ENCODE measurements at regions of chr6 and their contacts with region 1.

Region 1: DNA sequence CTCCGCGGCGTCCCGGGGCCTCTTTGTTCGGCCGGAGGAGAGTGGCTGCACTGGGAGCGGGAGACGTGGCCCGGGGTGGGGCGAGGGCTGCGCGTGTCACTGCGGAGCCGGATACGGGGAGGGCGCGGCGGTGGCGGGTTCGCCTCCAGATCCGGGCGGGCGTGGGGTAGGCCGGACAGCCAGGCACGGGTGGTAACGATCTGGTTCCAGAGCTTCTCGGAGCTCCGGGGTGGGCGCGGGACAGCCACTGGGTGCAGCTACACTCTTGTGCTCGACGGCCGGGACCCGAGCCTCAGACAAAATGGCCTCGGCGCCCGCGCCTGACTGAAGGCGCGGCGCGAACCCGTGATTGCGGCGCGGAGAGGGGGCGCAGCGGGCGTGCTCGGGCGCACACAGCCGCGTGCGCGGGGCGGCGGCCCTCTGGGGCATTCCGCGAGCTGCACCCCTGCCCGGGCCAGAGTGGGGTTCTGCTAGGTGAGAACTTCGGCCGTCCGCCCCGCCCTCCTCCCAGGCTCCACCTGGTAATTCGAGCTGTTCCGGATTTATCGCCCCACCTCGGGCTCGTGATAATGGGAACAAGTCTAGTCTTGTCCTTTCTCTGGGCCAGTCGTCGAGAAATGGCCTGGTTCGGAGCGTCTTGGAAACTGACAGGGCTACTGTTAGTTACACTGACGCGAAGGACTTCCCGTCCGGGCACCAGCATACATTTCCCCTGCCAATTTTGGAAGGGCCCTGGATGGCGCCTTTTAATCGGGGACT is 1.0 kb downstream of the LOC128125822 start:
- H3K4me3 ChIP-seq: peak overlapping the region; percentile 96
- H3K27ac ChIP-seq: peak overlapping the region; percentile 96
- H3K4me1 ChIP-seq: peaks cover 17% of the 10 kb centered on the region; the same call in 1 of the 2 replicates
- CTCF ChIP-seq: no peak; the same call in 1 of the 2 replicates

Region 2: GRCh38 chr6:63352587-63353285 is 220.6 kb before region 1 on chr6:
- CTCF ChIA-PET with region 1: interaction called, 24 read pairs
- POLR2A ChIA-PET with region 1: interaction called, 3 read pairs
- H3K4me3 ChIP-seq: no peak overlapping the region
- H3K27ac ChIP-seq: no peak overlapping the region
- H3K4me1 ChIP-seq: no peaks in the 10 kb centered on the region; the same call in 1 of the 2 replicates
- CTCF ChIP-seq: peak; percentile 59

Region 3: DNA sequence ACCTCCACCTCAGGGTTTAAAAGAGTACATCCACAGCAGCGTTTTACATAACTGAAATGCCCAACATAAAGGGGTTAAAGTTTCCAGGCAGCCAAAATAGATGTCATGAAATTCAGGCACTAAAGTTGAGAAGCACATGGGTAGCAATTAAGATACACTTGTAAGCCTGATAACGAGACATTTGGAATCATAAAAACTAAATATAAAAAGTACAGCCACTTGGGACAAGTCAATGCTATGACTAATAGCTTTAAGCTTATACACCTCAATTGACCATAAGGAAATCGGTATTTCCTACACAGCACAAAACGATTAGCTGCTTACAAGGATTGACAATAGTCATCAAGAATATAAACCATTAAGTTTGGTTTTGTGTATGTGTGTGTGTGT is 10.8 kb after region 1 on chr6:
- CTCF ChIA-PET with region 1: interaction called, 23 read pairs
- POLR2A ChIA-PET with region 1: interaction called, 7 read pairs
- H3K4me3 ChIP-seq: no peak overlapping the region
- H3K27ac ChIP-seq: no peak overlapping the region
- H3K4me1 ChIP-seq: no peaks in the 10 kb centered on the region
- CTCF ChIP-seq: no peak

Region 4: DNA sequence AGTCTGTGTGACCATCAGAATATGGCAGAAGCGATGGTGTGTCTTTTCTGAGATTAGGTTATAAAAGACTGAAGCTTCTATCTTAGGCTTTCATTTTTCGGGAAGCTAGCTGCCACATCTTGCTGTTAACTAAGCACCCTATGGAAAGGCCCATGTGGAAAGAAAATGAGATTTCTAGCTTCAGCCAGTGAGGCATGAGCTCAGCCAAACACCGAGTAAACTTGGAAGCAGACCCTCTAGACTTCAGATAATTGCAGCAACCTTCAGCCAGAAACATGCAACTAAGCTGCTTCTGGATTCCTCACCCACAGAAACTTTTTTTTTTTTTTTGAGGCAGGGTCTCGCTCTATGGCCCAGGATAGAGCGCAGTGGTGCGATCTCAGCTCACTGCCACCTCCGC is 19.6 kb after region 1 on chr6:
- CTCF ChIA-PET with region 1: interaction called, 17 read pairs
- POLR2A ChIA-PET with region 1: interaction called, 13 read pairs
- H3K4me3 ChIP-seq: no peak overlapping the region
- H3K27ac ChIP-seq: no peak overlapping the region
- H3K4me1 ChIP-seq: peaks cover 3% of the 10 kb centered on the region
- CTCF ChIP-seq: no peak

Region 5: GRCh38 chr6:63635588-63636517 is 62.5 kb after region 1 on chr6 and contains the start of gene PHF3:
- CTCF ChIA-PET with region 1: interaction called, 6 read pairs
- POLR2A ChIA-PET with region 1: interaction called, 13 read pairs
- H3K4me3 ChIP-seq: peak within 1 kb of the TSS; percentile 96
- H3K27ac ChIP-seq: peak within 1 kb of the TSS; percentile 95
- H3K4me1 ChIP-seq: peaks cover 30% of the 10 kb centered on the region
- CTCF ChIP-seq: peak; percentile 98

Region 6: GRCh38 chr6:63910863-63911551 is 337.7 kb after region 1 on chr6:
- CTCF ChIA-PET with region 1: no interaction called
- POLR2A ChIA-PET with region 1: no interaction called
- H3K4me3 ChIP-seq: no peak overlapping the region
- H3K27ac ChIP-seq: no peak overlapping the region
- H3K4me1 ChIP-seq: no peaks in the 10 kb centered on the region
- CTCF ChIP-seq: no peak